GM12878 (cell line): ENCODE measurements at regions of chr5 and their contacts with region 1.

Region 1: DNA sequence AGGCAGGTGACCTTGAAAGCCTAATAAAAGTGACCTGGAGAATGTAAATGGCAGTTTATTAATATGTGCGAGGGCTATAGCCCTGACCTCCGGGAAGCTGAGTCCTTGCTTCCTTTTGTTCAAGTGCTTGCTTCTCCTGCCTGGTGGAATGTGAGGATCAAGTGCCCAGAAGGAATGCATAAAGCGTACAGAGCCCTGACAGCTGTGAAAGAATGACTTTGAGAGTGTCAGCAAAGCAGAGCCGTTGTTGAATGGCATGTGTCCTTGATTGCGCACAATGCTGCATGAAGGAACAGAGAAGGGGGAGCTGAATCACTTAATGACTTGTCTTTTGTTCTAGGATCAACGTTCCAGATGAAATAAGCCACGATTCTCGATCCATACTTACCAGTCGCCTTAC is 133.0 kb downstream of the SLF1 start:
- DNase-seq: no peak
- ATAC-seq: no peak
- H3K4me3 ChIP-seq: no peak overlapping the region
- H3K27ac ChIP-seq: no peak overlapping the region
- H3K4me1 ChIP-seq: peaks cover 14% of the 10 kb centered on the region
- H3K27me3 ChIP-seq: no peaks in the 10 kb centered on the region
- CTCF ChIP-seq: no peak
- EP300 ChIP-seq: no peak
- POLR2A ChIP-seq: no peak
- RAD21 ChIP-seq: no peak

Region 2: GRCh38 chr5:94420885-94421284 is 330.6 kb before region 1 on chr5:
- CTCF ChIA-PET with region 1: no interaction called
- POLR2A ChIA-PET with region 1: no interaction called
- RAD21 ChIA-PET with region 1: no interaction called
- SMC1A ChIA-PET with region 1: no interaction called
- in situ Hi-C with region 1: no loop called
- intact Hi-C with region 1: no loop called
- DNase-seq: no peak
- ATAC-seq: no peak
- H3K4me3 ChIP-seq: no peak overlapping the region
- H3K27ac ChIP-seq: no peak overlapping the region
- H3K4me1 ChIP-seq: no peaks in the 10 kb centered on the region
- H3K27me3 ChIP-seq: no peaks in the 10 kb centered on the region
- CTCF ChIP-seq: no peak
- EP300 ChIP-seq: no peak
- POLR2A ChIP-seq: no peak
- RAD21 ChIP-seq: no peak

Region 3: GRCh38 chr5:94761786-94762185 is 10.3 kb after region 1 on chr5:
- CTCF ChIA-PET with region 1: interaction called, 11 read pairs
- POLR2A ChIA-PET with region 1: no interaction called
- RAD21 ChIA-PET with region 1: interaction called, 3 read pairs
- SMC1A ChIA-PET with region 1: interaction called, 13 read pairs
- in situ Hi-C with region 1: no loop called
- intact Hi-C with region 1: no loop called
- DNase-seq: no peak
- ATAC-seq: no peak
- H3K4me3 ChIP-seq: no peak overlapping the region
- H3K27ac ChIP-seq: no peak overlapping the region
- H3K4me1 ChIP-seq: no peaks in the 10 kb centered on the region
- H3K27me3 ChIP-seq: no peaks in the 10 kb centered on the region
- CTCF ChIP-seq: no peak
- EP300 ChIP-seq: no peak
- POLR2A ChIP-seq: no peak
- RAD21 ChIP-seq: no peak